Activated CD4-positive, alpha-beta T cell treated with anti-CD3 and anti-CD28 coated beads for 36 hours (primary cell): ENCODE measurements at regions of chr17 and their contacts with region 1.

Region 1: GRCh38 chr17:51153210-51154072 is at the start of gene NME1:
- DNase-seq: peak; percentile 98
- ATAC-seq: peak; percentile 93
- H3K4me3 Mint-ChIP-seq: no peak within 1 kb of the TSS
- H3K27ac Mint-ChIP-seq: no peak within 1 kb of the TSS
- H3K4me1 Mint-ChIP-seq: peaks cover 8% of the 10 kb centered on the region
- H3K27me3 Mint-ChIP-seq: no peaks in the 10 kb centered on the region
- total RNA-seq, gene NME1: 293 to 310 TPM

Region 2: DNA sequence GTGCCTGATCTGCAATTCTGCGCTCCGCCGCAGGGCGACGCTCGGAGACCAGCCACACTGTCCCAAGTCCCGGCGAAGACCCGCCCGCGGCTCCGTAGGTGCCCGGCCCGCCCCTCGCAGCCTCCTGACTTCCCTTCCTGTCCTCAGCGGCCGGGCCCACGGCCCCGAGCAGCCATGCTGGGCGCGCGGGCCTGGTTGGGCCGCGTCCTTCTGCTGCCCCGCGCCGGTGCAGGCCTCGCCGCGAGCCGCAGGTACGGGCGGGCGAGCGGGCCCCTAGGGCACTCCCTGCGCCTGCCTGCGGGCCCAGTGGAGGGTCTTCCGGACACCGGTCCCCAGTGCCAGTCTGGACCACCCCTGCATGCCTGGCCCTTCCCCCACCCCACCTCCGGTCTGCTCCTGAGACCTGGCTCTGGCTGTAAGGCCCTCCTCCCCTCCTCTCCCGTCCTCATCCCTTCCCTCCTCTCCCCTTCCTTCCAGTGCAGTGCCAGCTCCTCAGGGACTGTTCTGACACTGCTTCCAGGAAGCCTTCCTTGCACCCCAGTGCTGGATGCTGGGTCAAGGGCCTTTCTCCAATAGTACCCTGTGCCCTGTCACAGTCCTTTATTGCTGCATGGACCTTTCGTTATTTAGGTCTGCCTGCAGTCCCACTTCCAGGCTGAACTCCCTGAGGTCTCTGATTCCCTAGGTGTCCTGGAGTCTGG is 606.3 kb before region 1 on chr17 and contains the start of gene SPATA20:
- CTCF ChIA-PET with region 1: no interaction called
- POLR2A ChIA-PET with region 1: no interaction called
- intact Hi-C with region 1: loop called in 1 of 2 experiments (anchors 10 kb)
- DNase-seq: peak; percentile 93
- ATAC-seq: peak; percentile 88
- H3K4me3 Mint-ChIP-seq: peak within 1 kb of the TSS; percentile 63
- H3K27ac Mint-ChIP-seq: no peak within 1 kb of the TSS
- H3K4me1 Mint-ChIP-seq: peaks cover 8% of the 10 kb centered on the region
- H3K27me3 Mint-ChIP-seq: peaks cover 7% of the 10 kb centered on the region
- total RNA-seq, gene SPATA20: 9.0 to 10.7 TPM

Region 3: DNA sequence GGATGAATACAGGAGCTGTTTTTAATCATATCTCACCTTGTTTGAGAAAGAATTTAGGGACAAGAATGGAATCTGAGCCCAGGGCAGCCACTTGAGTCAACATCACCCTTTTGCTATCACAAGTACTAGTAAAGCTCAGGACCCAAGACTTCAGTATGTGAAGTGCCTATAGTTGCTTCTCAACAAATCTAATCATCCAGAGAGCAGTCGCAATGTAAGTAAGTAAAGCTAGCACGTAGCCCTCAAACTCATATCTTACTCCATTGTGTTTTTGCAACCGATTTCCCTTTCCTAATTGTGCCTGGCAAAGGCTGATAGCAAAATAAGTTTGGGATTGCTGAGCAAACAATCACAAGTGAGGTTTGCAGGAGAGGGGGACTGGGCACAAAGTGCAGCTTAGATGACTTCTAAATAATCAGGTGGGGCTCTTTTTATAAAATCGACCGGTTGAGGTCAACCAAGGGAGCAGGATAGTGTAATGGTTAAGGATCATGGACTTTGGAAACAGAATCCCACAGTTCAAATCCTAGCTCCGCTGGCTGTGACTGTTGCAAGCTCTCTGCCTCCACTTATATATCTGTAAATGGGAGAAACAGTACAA is 300.3 kb before region 1 on chr17:
- CTCF ChIA-PET with region 1: no interaction called
- POLR2A ChIA-PET with region 1: no interaction called
- intact Hi-C with region 1: loop called in 1 of 2 experiments (anchors 1 kb)
- DNase-seq: no peak
- ATAC-seq: no peak
- H3K4me3 Mint-ChIP-seq: no peak overlapping the region
- H3K27ac Mint-ChIP-seq: peak overlapping the region; percentile 78
- H3K4me1 Mint-ChIP-seq: peaks cover 13% of the 10 kb centered on the region
- H3K27me3 Mint-ChIP-seq: no peaks in the 10 kb centered on the region

Region 4: GRCh38 chr17:51120739-51121617 is 32.5 kb before region 1 on chr17 and contains the start of gene SPAG9:
- CTCF ChIA-PET with region 1: interaction called, 9 read pairs
- POLR2A ChIA-PET with region 1: no interaction called
- intact Hi-C with region 1: loop called (anchors 1 kb)
- DNase-seq: peak; percentile 95
- ATAC-seq: peak; percentile 62
- H3K4me3 Mint-ChIP-seq: peak within 1 kb of the TSS; percentile 89
- H3K27ac Mint-ChIP-seq: peak within 1 kb of the TSS; percentile 100
- H3K4me1 Mint-ChIP-seq: peaks cover 51% of the 10 kb centered on the region
- H3K27me3 Mint-ChIP-seq: no peaks in the 10 kb centered on the region
- total RNA-seq, gene SPAG9: 48.0 to 88.2 TPM

Region 5: DNA sequence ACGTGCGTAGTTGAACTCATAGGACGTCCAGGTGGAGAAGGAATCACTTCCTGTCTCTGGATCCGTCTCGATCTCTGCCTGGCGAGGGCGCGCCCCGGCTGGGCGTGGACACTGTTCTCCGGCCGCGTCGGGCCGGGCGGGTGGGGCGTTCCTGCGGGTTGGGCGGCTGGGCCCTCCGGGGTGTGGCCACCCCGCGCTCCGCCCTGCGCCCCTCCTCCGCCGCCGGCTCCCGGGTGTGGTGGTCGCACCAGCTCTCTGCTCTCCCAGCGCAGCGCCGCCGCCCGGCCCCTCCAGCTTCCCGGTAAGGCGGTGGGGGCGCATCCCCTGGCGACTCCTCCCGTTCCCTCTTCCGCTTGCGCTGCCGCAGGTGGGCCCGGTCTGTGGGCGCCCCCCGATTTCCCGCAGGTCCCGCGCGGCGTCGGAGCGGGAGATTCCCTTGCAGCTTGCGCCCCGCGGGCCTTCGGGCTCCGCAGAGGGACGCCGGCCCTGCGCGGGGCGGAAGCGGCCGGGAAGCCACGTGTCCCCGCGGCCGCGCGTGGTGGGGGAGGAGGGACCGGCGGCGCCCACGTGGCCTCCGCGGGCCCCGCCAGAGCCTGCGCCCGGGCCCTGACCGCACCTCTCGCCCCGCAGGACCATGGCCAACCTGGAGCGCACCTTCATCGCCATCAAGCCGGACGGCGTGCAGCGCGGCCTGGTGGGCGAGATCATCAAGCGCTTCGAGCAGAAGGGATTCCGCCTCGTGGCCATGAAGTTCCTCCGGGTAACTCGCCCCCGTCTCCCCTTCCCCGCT is 13.0 kb after region 1 on chr17 and contains the start of gene NME2:
- CTCF ChIA-PET with region 1: interaction called, 15 read pairs
- POLR2A ChIA-PET with region 1: interaction called, 23 read pairs
- intact Hi-C with region 1: loop called (anchors 1 kb)
- DNase-seq: peak; percentile 80
- ATAC-seq: peak; percentile 76
- H3K4me3 Mint-ChIP-seq: peak within 1 kb of the TSS; percentile 79
- H3K27ac Mint-ChIP-seq: peak within 1 kb of the TSS; percentile 95
- H3K4me1 Mint-ChIP-seq: peaks cover 31% of the 10 kb centered on the region
- H3K27me3 Mint-ChIP-seq: no peaks in the 10 kb centered on the region
- total RNA-seq, gene NME2: 703 to 827 TPM